Heart left ventricle (tissue), 16 donors: ENCODE measurements at regions of chr17 and their contacts with region 1.

Region 1: GRCh38 chr17:10875979-10876555 is 38.2 kb upstream of the PIRT start:
- DNase-seq: peak in 3 of 5 donors; percentile 13 to 41 (median 18)
- ATAC-seq: peak in 1 of 4 donors; percentile 41
- H3K4me3 ChIP-seq: no peak overlapping the region
- H3K27ac ChIP-seq: no peak overlapping the region
- H3K4me1 ChIP-seq: no peaks in the 10 kb centered on the region
- H3K27me3 ChIP-seq: peaks cover 0 to 30% (median 0%) of the 10 kb centered on the region in 9 donors
- CTCF ChIP-seq: peak; percentile 53 to 74 (median 66)
- POLR2A ChIP-seq: no peak

Region 2: DNA sequence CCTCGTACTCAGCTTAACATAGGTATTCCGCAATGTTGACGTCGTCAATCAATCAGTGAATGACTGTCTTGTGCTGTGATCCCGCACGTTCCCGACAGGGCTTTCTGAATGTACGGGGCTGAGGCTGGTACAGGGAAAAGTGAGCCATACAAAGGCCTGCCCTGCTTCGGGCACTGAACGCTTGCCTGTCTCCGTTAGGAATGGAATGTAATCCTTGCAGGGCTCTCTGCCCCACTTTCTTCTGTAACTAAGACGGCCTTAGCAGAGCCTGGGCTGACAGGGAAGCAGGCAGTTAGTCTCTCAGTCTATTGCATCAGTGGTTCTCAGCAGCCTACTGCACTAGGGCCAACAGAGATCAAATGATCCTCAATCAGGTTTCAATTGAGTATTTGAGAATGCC is 202.8 kb before region 1 on chr17:
- intact Hi-C with region 1: no loop called
- DNase-seq: no peak
- ATAC-seq: no peak
- H3K4me3 ChIP-seq: no peak overlapping the region
- H3K27ac ChIP-seq: no peak overlapping the region
- H3K4me1 ChIP-seq: no peaks in the 10 kb centered on the region
- H3K27me3 ChIP-seq: no peaks in the 10 kb centered on the region
- CTCF ChIP-seq: no peak
- POLR2A ChIP-seq: no peak

Region 3: GRCh38 chr17:11122908-11123307 is 246.8 kb after region 1 on chr17:
- intact Hi-C with region 1: loop called in 1 of 10 experiments (anchors 5 kb)
- DNase-seq: peak in 2 of 5 donors; percentile 5 to 46
- ATAC-seq: peak in 3 of 4 donors; percentile 31 to 61 (median 39)
- H3K4me3 ChIP-seq: no peak overlapping the region
- H3K27ac ChIP-seq: no peak overlapping the region
- H3K4me1 ChIP-seq: peaks cover 0 to 3% (median 0%) of the 10 kb centered on the region in 12 donors
- H3K27me3 ChIP-seq: no peaks in the 10 kb centered on the region
- CTCF ChIP-seq: no peak
- POLR2A ChIP-seq: no peak

Region 4: DNA sequence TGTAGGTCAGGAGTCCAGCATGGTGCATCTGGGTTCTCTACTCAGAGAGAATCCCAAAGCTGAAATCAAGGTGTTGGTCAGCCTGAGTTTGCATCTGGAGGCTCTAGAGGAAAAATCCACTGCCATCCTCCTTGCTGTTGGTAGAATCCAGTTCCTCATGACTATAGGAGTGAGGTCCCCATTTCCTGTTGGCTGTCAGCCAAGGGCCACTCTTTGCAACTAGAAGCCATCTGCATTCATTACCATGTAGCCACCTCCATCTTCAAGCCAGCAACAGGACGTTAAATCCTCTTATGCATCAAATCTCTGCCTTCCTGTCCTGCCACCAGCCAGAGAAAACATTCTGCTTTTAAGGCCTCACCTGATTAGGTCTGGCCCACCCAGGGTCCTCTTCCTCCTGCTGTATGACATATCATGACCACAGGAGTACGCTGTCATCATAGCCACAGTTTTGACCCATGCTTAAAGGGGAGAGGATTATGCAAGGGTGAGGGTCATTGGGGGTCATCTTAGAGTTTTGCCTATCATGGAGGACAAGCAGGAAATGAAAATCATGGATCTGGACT is 762.7 kb after region 1 on chr17:
- intact Hi-C with region 1: loop called in 5 of 10 experiments (anchors 10 kb)
- DNase-seq: no peak
- ATAC-seq: no peak
- H3K4me3 ChIP-seq: no peak overlapping the region
- H3K27ac ChIP-seq: no peak overlapping the region
- H3K4me1 ChIP-seq: no peaks in the 10 kb centered on the region
- H3K27me3 ChIP-seq: peaks cover 0 to 23% (median 0%) of the 10 kb centered on the region in 9 donors
- CTCF ChIP-seq: no peak
- POLR2A ChIP-seq: no peak

Region 5: GRCh38 chr17:11935734-11936406 is 1059.8 kb after region 1 on chr17:
- intact Hi-C with region 1: loop called in 5 of 10 experiments (anchors 2 to 10 kb)
- DNase-seq: peak in 4 of 5 donors; percentile 31 to 41 (median 36)
- ATAC-seq: no peak
- H3K4me3 ChIP-seq: no peak overlapping the region
- H3K27ac ChIP-seq: no peak overlapping the region
- H3K4me1 ChIP-seq: no peaks in the 10 kb centered on the region
- H3K27me3 ChIP-seq: peaks cover 0 to 4% (median 0%) of the 10 kb centered on the region in 9 donors
- CTCF ChIP-seq: peak; percentile 76 to 96 (median 84)
- POLR2A ChIP-seq: no peak

Region 6: DNA sequence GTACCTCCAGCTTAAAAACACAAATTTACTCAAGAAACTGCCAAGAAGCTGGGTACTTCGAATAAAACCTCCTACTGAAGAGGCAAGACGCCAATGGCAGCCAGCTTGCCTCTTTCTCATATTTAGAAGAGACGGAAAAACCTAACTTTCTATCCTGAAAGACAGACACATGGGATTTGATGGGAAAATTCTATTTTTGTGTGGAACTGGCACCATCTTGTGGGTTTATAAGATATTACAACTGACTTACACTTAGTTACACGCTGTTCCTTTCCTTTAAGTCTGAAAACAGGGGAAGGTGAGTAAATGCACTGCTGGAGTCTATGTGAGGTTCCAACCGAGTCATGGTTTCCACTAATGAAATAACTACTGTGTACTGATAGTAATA is 1110.9 kb after region 1 on chr17:
- intact Hi-C with region 1: loop called (anchors 2 to 10 kb)
- DNase-seq: no peak
- ATAC-seq: peak; percentile 34 to 76 (median 54)
- H3K4me3 ChIP-seq: no peak overlapping the region
- H3K27ac ChIP-seq: peak overlapping the region in 2 of 12 donors; percentile 48 to 59
- H3K4me1 ChIP-seq: peaks cover 0 to 11% (median 0%) of the 10 kb centered on the region in 12 donors
- H3K27me3 ChIP-seq: no peaks in the 10 kb centered on the region
- CTCF ChIP-seq: peak; percentile 25 to 66 (median 52)
- POLR2A ChIP-seq: no peak